ENCODE measurements at regions of chr4 and their contacts with region 1.

Region 1: GRCh38 chr4:113474017-113474416 is 287.5 kb downstream of the CAMK2D start:
- DNase-seq: no peak
- ATAC-seq: peak in 2 of 8 donors; percentile 64 to 78
- H3K4me3 ChIP-seq: no peak overlapping the region
- H3K27ac ChIP-seq: peak overlapping the region in 5 of 10 donors; percentile 11 to 85 (median 27)
- H3K4me1 ChIP-seq: peaks cover 5 to 47% (median 22%) of the 10 kb centered on the region in 9 donors
- H3K27me3 ChIP-seq: no peaks in the 10 kb centered on the region
- CTCF ChIP-seq: no peak

Region 2: GRCh38 chr4:113524096-113524495 is 50.1 kb after region 1 on chr4:
- intact Hi-C with region 1: loop called in 1 of 10 experiments (anchors 10 kb)
- DNase-seq: no peak
- ATAC-seq: no peak
- H3K4me3 ChIP-seq: no peak overlapping the region
- H3K27ac ChIP-seq: no peak overlapping the region
- H3K4me1 ChIP-seq: peaks cover 0 to 5% (median 0%) of the 10 kb centered on the region in 9 donors
- H3K27me3 ChIP-seq: no peaks in the 10 kb centered on the region
- CTCF ChIP-seq: no peak